IMR-90 (cell line): ENCODE measurements at regions of chr7 and their contacts with region 1.

Region 1: DNA sequence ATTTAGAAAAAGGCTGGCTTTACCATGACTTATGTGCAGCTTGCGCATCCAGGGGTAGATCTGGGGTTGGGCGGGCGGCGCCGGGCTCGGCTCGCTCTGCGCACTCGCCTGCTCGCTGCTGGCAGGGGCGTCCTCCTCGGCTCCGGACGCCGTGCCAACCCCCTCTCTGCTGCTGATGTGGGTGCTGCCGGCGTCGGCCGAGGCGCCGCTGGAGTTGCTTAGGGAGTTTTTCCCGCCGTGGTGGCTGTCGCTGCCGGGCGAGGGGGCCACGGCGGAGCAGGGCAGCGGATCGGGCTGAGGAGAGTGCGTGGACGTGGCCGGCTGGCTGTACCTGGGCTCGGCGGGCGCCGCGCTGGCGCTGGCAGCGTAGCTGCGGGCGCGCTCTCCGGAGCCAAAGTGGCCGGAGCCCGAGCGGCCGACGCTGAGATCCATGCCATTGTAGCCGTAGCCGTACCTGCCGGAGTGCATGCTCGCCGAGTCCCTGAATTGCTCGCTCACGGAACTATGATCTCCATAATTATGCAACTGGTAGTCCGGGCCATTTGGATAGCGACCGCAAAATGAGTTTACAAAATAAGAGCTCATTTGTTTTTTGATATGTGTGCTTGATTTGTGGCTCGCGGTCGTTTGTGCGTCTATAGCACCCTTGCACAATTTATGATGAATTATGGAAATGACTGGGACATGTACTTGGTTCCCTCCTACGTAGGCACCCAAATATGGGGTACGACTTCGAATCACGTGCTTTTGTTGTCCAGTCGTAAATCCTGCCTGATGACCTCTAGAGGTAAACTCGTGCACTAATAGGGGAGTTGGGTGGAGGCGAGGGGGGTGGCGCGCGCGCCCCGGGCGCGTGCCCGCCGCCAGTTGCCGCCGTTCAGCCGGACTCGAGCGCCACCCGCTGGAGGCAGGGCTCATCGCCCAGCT is at the start of gene HOXA5:
- DNase-seq: peak; percentile 100
- ATAC-seq: peak; percentile 64
- H3K4me3 ChIP-seq: peak within 1 kb of the TSS; percentile 93
- H3K27ac ChIP-seq: peak within 1 kb of the TSS; percentile 93
- H3K4me1 ChIP-seq: peaks cover 16% of the 10 kb centered on the region
- H3K27me3 ChIP-seq: no peaks in the 10 kb centered on the region
- CTCF ChIP-seq: peak; percentile 98
- POLR2A ChIP-seq: peak; percentile 89
- RAD21 ChIP-seq: peak; percentile 95
- total RNA-seq, gene HOXA5: 19.9 and 23.9 TPM in 2 replicates

Region 2: DNA sequence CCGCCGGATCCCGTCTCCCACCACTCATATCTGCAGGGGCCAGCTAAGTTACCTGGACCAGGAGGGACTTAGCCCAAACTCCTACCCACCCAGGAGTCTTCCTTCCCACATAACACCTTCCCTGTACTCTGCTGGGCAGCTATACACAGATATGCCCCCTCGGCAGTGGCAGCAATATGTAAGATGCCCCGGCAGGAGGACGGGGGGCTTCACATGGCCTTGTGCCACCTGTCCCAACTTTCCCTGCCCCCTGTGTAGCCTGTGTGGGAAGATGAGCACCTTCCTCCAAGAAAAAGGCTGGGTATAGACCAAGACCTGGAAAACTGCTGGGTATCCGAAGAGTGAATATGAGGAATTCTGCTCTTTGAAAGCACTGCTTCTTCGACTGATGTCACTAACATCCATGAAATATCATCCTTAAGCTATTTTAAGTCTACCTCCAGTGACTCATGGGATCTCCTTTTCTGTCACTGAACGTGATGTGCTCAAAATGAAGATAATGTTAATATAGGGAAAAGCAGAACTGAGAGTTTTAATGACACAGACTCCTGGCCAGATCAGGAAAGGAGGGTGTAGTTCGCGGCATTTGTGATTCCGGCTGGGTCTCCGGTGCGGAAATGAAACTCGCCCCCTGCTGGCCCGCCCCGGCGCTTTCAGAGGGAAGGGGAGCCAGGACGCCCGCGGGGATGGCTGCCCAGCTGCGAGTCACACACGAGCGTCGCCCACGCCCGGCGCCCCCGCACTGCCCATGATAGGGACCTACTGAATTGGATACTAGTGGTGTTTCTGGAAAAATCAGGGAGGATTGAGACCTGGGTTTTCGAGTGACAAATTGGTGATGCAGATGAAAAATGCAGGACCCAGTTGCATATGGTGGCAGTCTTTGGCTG is 1248.1 kb before region 1 on chr7:
- CTCF ChIA-PET with region 1: no interaction called
- POLR2A ChIA-PET with region 1: no interaction called
- dilution Hi-C with region 1: no loop called
- in situ Hi-C with region 1: no loop called
- intact Hi-C with region 1: loop called (anchors 5 kb)
- DNase-seq: peak; percentile 2
- ATAC-seq: peak; percentile 69
- H3K4me3 ChIP-seq: peak overlapping the region; percentile 33; the same call in 1 of the 2 replicates
- H3K27ac ChIP-seq: no peak overlapping the region
- H3K4me1 ChIP-seq: no peaks in the 10 kb centered on the region
- H3K27me3 ChIP-seq: peaks cover 25% of the 10 kb centered on the region
- CTCF ChIP-seq: peak; percentile 50
- POLR2A ChIP-seq: no peak
- RAD21 ChIP-seq: no peak

Region 3: DNA sequence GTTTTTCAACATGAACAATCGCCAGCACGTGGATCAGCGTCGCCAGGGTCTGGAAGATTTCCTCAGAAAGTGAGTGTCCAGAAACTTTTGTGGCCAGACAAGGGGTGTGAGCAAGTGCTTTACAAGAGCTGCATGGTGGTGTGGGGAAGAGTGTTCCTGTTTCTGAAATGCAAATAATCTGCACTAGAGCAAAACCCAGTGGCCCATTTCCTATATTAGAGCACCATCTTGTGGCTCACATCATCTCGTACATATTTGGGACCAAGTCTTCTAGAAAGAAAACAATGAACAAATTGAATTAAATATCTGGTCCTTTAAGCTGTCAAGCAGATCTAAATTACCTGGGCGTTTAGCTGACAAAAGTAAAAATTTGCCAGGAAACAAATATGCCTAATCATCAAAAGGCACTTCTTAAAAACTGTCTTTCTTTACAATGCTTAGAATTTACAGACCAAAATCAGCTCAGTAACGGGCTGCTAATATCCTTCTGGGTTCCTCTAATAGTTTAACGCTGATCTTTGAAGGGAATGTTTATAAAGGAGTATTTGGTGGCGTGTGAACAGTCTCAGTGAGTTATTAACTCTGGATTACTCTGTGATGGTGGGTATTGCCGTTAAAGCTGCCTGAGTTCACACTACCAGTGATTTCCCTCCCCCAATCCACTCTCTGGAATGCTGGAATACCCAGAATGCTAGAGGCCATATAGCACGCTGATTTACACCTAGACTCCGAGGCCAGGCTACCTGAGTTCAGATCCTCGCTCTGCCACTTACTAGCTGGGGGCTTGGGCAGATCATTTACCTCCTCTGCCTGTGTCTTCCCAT is 778.0 kb before region 1 on chr7:
- CTCF ChIA-PET with region 1: interaction called, 7 read pairs
- POLR2A ChIA-PET with region 1: no interaction called
- dilution Hi-C with region 1: no loop called
- in situ Hi-C with region 1: no loop called
- intact Hi-C with region 1: loop called (anchors 1 kb)
- DNase-seq: peak; percentile 77
- ATAC-seq: peak; percentile 92
- H3K4me3 ChIP-seq: no peak overlapping the region
- H3K27ac ChIP-seq: no peak overlapping the region
- H3K4me1 ChIP-seq: no peaks in the 10 kb centered on the region
- H3K27me3 ChIP-seq: peaks cover 16% of the 10 kb centered on the region
- CTCF ChIP-seq: peak; percentile 93
- POLR2A ChIP-seq: no peak
- RAD21 ChIP-seq: peak; percentile 98

Region 4: GRCh38 chr7:26853788-26854393 is 289.4 kb before region 1 on chr7:
- CTCF ChIA-PET with region 1: interaction called, 4 read pairs
- POLR2A ChIA-PET with region 1: no interaction called
- dilution Hi-C with region 1: no loop called
- in situ Hi-C with region 1: loop called (anchors 5 kb)
- intact Hi-C with region 1: no loop called
- DNase-seq: peak; percentile 75
- ATAC-seq: 0 out of 2 replicates have a peak, but pooled peaks have one; percentile 51
- H3K4me3 ChIP-seq: no peak overlapping the region
- H3K27ac ChIP-seq: no peak overlapping the region
- H3K4me1 ChIP-seq: no peaks in the 10 kb centered on the region; the same call in 1 of the 2 replicates
- H3K27me3 ChIP-seq: no peaks in the 10 kb centered on the region
- CTCF ChIP-seq: peak; percentile 70
- POLR2A ChIP-seq: no peak
- RAD21 ChIP-seq: peak; percentile 70

Region 5: DNA sequence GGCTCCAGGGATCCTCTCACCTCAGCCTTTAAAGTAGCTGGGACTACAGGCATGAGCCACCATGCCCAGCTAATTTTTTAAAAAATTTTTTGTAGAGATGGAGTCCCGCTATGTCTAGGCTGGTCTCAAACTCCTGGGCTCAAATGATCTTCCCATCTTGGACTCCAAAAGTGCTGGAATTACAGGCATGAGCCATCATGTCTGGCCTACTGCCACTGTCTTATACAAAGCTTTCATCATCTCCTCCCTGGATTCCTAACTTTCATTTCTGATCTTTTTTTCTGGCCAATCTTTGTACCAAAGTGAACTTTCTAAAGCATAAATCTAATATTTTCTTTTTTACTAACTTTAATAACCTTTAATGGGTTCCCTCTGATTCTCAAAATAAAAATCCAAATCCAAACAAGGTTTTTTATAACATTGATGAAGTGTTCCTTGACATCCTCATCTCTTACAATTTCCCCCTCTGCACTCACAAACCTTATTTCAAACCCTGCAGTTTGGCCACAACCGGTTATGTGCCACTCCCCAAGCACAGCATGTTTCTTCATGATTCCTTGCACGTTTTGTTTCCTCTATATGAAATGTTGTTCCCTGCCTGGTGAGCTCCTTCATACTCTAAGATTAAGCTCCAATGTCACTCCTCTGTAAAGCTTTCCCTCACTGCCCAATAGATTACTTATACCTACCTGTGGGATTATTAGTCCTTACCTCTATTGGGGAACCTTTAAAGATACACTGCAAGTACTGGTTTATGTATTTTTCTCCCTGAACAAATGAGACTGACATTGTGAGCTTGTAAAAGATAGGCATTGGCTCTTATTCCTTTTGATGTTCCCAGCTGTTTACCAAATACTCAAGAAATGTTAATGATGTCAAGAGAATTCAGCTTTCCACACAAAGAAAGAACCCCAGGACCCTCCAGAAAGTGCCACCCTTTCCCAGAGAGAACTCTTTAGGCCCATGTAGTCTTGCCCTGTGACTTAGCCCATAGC is 149.2 kb before region 1 on chr7:
- CTCF ChIA-PET with region 1: no interaction called
- POLR2A ChIA-PET with region 1: no interaction called
- dilution Hi-C with region 1: no loop called
- in situ Hi-C with region 1: no loop called
- intact Hi-C with region 1: no loop called
- DNase-seq: peak; percentile 54
- ATAC-seq: 0 out of 2 replicates have a peak, but pooled peaks have one; percentile 35
- H3K4me3 ChIP-seq: no peak overlapping the region
- H3K27ac ChIP-seq: peak overlapping the region; percentile 59; the same call in 1 of the 2 replicates
- H3K4me1 ChIP-seq: no peaks in the 10 kb centered on the region; the same call in 1 of the 2 replicates
- H3K27me3 ChIP-seq: peaks cover 2% of the 10 kb centered on the region; the same call in 1 of the 2 replicates
- CTCF ChIP-seq: no peak
- POLR2A ChIP-seq: no peak
- RAD21 ChIP-seq: no peak